Posterior cingulate gyrus (tissue), 11 donors: ENCODE measurements at regions of chr6 and their contacts with region 1.

Region 1: DNA sequence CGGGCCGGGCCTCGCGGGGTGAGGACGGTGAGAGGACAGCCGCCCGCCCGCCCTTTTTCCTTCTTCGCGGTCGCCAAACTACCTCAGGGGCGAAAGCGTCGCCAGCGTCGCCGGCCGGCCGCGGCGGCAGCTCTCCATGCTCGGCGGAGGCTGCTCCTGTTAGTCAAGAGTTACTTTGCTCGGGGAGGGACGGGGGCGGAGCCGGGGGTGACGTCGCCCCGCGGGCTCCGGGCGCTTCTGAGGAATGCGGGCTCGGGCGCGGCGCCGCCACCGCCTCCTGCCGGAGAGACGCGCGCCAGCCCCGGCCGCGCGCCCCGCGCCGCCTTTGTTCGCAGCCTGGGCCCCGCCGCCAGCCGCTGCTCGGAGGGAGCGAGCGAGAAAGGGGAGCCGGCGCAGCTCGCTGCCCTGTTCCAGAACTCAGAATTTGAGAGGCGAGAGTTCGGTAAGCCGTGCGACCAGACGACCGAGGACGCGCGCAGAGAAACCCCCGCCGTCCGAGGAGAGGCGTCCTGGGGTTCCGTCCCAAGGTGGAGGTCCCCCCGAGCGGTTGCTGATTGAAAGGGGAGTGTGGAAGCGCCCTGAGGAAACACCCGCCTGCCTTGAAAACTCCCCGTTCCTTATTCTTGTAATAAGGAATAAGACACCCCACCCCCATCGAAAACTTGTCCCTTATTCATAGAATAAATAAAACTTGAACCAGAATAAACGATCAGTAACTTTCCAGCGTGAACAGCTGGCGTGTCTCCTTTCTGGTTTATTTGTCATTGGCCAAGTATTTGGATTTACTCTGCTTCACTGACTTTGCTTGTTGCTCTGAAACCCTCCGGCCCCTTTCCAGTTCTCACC is at the start of gene PTPRK:
- DNase-seq: peak; percentile 87 to 99 (median 92)

Region 2: GRCh38 chr6:127855542-127856159 is 665.0 kb before region 1 on chr6:
- intact Hi-C with region 1: loop called (anchors 2 kb)
- DNase-seq: peak in 5 of 10 donors; percentile 8 to 63 (median 38)

Region 3: DNA sequence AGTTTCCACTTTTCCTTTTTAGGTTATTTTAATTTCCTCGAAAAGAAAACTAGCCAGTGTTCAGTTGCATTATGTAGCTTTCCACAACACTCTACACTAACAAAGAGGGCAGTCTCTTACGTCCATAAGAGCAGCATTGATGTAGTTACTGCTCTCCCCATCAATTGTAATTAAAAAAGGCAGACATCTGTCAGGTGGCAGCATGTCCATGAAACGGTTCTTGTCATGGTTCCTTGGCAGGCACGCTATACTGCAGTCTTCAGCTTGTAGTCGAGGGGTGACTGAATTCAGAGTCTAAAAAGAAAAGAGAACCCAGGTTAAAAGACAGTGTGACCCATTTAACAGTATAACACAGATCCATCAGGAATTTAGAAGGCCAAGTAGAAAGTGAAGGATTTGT is 539.7 kb before region 1 on chr6:
- intact Hi-C with region 1: loop called (anchors 10 kb)
- DNase-seq: peak in 5 of 10 donors; percentile 7 to 87 (median 30)

Region 4: GRCh38 chr6:128068116-128068479 is 452.6 kb before region 1 on chr6:
- intact Hi-C with region 1: loop called (anchors 5 kb)
- DNase-seq: peak in 3 of 10 donors; percentile 17 to 52 (median 38)

Region 5: GRCh38 chr6:128098000-128098581 is 422.6 kb before region 1 on chr6:
- intact Hi-C with region 1: no loop called
- DNase-seq: no peak

Region 6: DNA sequence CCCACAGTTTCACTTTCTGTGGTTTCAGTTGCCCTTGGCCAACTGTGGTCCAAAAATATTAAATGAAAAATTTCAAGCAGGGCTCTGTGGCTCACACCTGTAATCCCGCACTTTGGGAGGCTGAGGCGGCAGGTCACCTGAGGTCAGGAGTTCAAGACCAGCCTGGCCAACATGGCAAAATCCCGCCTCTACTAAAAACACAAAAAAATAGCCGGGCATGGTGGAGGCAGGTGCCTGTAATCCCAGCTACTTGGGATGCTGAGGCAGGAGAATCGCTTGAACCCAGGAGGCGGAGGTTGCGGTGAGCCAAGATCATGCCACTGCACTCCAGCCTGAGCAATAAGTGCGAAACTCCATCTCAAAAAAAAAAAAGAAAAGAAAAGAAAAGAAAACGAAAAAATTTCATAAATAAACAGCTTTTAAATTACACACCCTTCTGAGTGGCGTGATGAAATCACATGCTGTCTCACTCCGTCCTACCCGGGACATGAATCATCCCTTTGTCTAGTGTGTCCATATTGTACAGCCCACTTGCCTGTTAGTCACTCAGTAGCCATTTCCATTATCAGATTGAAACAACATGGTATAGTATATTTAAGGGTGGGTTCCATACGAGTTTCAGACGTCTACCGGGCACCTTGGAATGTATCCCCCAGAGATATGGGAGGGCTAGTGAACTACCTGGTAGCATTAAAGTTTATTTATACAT is 11.9 kb before region 1 on chr6:
- intact Hi-C with region 1: no loop called
- DNase-seq: peak in 4 of 10 donors; percentile 22 to 87 (median 40)